IMR-90 (cell line): ENCODE measurements at regions of chr12 and their contacts with region 1.

Region 1: DNA sequence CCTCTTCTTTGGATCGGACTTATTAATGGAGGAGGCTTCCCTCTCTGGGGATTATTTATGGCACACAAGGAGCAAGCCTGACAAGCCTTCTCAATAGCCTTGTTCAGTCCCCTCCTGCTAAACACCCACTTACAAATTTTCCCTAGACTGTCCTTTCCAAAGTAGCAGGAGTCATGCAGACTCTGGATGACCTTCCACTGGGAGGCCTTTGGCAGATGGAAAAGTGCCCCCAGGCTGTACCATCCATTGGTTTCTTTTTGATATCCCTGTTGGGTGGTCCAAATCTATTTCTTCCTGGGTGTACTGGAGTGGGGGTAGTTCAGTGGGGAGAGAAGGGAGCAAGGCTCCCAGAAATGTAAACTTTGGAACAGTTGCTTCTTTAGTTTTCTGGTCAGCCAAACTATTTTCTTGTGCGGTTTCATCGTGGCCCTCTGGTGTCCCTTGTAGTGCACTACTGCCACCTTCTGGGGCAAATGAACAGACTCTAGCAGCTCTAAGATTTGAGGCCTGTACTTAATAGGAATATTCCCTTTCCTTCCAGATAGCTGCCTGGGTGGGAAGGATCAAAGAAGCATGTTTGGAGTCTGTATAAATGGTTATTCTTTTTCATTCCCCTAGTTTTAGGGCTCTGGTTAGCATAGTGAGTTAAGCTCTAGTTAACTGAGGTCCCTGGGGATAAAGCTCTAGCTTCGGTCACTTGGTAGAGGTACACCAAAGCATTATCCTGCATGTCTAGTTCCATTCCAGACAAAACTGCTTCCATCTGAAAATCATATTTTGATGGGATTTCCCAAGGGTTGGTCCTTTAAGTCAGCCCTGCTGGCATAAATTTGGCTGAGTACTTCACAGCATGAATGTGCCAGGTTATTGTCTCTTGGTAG is 409.5 kb downstream of the SLC6A15 start:
- DNase-seq: peak; percentile 72
- ATAC-seq: peak; percentile 99
- H3K4me3 ChIP-seq: no peak overlapping the region
- H3K27ac ChIP-seq: no peak overlapping the region
- H3K4me1 ChIP-seq: no peaks in the 10 kb centered on the region; the same call in 1 of the 2 replicates
- H3K27me3 ChIP-seq: no peaks in the 10 kb centered on the region
- CTCF ChIP-seq: peak; percentile 90
- POLR2A ChIP-seq: no peak
- RAD21 ChIP-seq: peak; percentile 90

Region 2: DNA sequence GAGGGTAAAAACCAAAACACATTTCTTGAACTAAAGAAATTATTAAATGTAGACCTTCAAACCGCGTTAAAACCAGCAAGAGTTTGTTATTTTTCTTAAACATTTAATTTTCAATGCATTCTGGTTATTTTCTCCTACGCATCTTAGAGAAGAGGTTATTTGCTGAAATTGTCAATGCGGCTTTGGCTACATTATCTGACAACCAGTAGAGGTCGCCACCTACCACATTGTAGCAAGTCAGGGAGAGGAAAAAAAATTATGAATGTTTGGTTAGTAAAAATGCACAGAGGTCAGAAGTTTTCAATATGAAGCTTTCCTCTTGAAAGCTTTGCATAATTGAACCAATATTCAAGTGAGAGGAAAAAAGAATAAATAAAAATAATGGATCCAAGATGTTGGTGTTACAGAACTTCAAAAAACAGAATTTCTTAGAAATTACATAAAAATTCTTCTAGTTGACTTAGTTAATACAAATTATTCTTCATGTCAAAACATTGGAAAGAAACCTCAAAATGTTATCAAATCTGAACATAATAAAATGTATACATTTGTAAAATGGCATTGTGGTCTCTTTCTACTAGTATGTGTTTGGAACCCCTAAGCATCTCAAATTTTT is 1975.9 kb before region 1 on chr12:
- CTCF ChIA-PET with region 1: no interaction called
- POLR2A ChIA-PET with region 1: no interaction called
- dilution Hi-C with region 1: no loop called
- in situ Hi-C with region 1: loop called (anchors 25 kb)
- intact Hi-C with region 1: loop called (anchors 1 kb)
- DNase-seq: peak; percentile 64
- ATAC-seq: peak; percentile 76; the same call in 1 of the 2 replicates
- H3K4me3 ChIP-seq: no peak overlapping the region
- H3K27ac ChIP-seq: no peak overlapping the region
- H3K4me1 ChIP-seq: no peaks in the 10 kb centered on the region
- H3K27me3 ChIP-seq: no peaks in the 10 kb centered on the region
- CTCF ChIP-seq: peak; percentile 86
- POLR2A ChIP-seq: no peak
- RAD21 ChIP-seq: peak; percentile 65

Region 3: DNA sequence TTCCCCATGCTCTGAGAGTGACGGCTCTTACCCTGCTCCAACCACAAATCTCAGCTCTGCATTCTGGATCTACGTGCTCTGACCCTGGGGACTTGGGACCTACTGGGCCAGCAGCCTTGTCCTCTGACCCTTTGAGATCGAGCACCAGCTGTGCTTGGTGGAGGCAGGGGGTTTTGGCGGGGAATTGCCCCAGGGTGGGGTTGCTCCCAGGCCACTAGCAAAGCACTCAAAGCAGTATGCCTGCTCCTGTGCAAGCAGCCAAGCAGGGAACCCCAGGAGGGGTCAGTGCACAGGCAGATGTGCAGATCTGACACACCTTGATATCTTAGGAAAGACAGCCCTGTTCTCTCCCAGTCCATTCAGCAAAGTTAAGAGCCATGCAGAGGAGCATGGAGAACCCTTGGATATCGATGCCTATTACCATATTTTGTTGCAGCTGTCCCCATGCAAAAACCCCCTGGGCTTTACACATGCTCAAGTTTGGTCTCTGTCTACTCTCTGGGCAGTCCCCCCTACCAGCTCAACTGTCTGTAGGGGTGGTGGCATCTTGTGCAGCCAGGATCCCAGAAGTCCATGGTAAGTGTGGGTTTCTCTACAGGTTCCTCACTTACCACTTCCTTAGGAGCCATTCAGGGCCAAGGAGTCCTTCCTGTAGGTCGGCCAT is 1497.5 kb before region 1 on chr12:
- CTCF ChIA-PET with region 1: no interaction called
- POLR2A ChIA-PET with region 1: no interaction called
- dilution Hi-C with region 1: no loop called
- in situ Hi-C with region 1: loop called (anchors 25 kb)
- intact Hi-C with region 1: loop called (anchors 1 kb)
- DNase-seq: no peak
- ATAC-seq: no peak
- H3K4me3 ChIP-seq: no peak overlapping the region
- H3K27ac ChIP-seq: no peak overlapping the region
- H3K4me1 ChIP-seq: no peaks in the 10 kb centered on the region
- H3K27me3 ChIP-seq: no peaks in the 10 kb centered on the region
- CTCF ChIP-seq: no peak
- POLR2A ChIP-seq: no peak
- RAD21 ChIP-seq: no peak

Region 4: DNA sequence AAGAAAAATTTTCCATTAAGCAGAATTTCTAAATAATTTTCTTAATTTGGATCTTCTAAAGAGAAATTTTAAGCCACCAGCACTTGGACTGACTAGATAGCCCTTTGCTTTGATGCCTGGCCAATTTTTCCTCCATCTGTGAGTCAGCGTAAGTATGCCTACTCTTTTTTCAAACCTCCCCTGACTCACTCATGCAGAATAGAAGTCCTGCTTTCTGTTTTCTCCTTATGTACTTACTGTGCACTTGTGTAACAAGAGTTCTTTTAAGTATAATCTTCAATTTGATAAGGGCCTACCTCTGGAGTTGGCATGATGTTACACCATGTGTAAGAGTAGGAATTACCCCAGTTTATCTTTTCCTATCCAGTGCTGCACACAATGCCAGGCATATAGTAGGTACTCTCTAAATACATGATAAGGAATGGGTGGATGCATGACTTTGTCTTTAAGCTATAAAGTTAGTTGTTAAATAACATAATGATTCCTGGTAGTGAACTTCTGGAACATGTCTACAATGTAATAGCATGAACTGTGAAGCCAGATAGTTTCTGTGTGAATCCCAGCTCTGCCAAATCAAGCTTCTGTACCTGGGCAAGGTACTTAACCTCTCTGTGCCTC is 1486.8 kb before region 1 on chr12:
- CTCF ChIA-PET with region 1: no interaction called
- POLR2A ChIA-PET with region 1: no interaction called
- dilution Hi-C with region 1: no loop called
- in situ Hi-C with region 1: loop called (anchors 25 kb)
- intact Hi-C with region 1: no loop called
- DNase-seq: peak; percentile 89
- ATAC-seq: peak; percentile 96
- H3K4me3 ChIP-seq: no peak overlapping the region
- H3K27ac ChIP-seq: no peak overlapping the region
- H3K4me1 ChIP-seq: no peaks in the 10 kb centered on the region
- H3K27me3 ChIP-seq: no peaks in the 10 kb centered on the region
- CTCF ChIP-seq: no peak
- POLR2A ChIP-seq: no peak
- RAD21 ChIP-seq: no peak

Region 5: GRCh38 chr12:83823431-83823963 is 679.6 kb before region 1 on chr12:
- CTCF ChIA-PET with region 1: interaction called, 4 read pairs
- POLR2A ChIA-PET with region 1: no interaction called
- dilution Hi-C with region 1: no loop called
- in situ Hi-C with region 1: no loop called
- intact Hi-C with region 1: loop called (anchors 1 kb)
- DNase-seq: no peak
- ATAC-seq: no peak
- H3K4me3 ChIP-seq: no peak overlapping the region
- H3K27ac ChIP-seq: no peak overlapping the region
- H3K4me1 ChIP-seq: no peaks in the 10 kb centered on the region
- H3K27me3 ChIP-seq: no peaks in the 10 kb centered on the region
- CTCF ChIP-seq: no peak
- POLR2A ChIP-seq: no peak
- RAD21 ChIP-seq: no peak